Activated B cell treated with CpG ODN at 0.5 μM for 24 hours (primary cell): ENCODE measurements at regions of chrX and their contacts with region 1.

Region 1: GRCh38 chrX:86066997-86067396 is 19.6 kb upstream of the CHM start:
- DNase-seq: no peak
- ATAC-seq: no peak
- H3K4me3 Mint-ChIP-seq: no peak overlapping the region
- H3K27ac Mint-ChIP-seq: no peak overlapping the region
- H3K4me1 Mint-ChIP-seq: no peaks in the 10 kb centered on the region
- H3K27me3 Mint-ChIP-seq: no peaks in the 10 kb centered on the region
- CTCF ChIP-seq: no peak

Region 2: GRCh38 chrX:85851418-85851817 is 215.6 kb before region 1 on chrX:
- CTCF ChIA-PET with region 1: no interaction called
- POLR2A ChIA-PET with region 1: no interaction called
- intact Hi-C with region 1: loop called (anchors 5 kb)
- DNase-seq: no peak
- ATAC-seq: no peak
- H3K4me3 Mint-ChIP-seq: no peak overlapping the region
- H3K27ac Mint-ChIP-seq: no peak overlapping the region
- H3K4me1 Mint-ChIP-seq: no peaks in the 10 kb centered on the region
- H3K27me3 Mint-ChIP-seq: no peaks in the 10 kb centered on the region
- CTCF ChIP-seq: no peak

Region 3: DNA sequence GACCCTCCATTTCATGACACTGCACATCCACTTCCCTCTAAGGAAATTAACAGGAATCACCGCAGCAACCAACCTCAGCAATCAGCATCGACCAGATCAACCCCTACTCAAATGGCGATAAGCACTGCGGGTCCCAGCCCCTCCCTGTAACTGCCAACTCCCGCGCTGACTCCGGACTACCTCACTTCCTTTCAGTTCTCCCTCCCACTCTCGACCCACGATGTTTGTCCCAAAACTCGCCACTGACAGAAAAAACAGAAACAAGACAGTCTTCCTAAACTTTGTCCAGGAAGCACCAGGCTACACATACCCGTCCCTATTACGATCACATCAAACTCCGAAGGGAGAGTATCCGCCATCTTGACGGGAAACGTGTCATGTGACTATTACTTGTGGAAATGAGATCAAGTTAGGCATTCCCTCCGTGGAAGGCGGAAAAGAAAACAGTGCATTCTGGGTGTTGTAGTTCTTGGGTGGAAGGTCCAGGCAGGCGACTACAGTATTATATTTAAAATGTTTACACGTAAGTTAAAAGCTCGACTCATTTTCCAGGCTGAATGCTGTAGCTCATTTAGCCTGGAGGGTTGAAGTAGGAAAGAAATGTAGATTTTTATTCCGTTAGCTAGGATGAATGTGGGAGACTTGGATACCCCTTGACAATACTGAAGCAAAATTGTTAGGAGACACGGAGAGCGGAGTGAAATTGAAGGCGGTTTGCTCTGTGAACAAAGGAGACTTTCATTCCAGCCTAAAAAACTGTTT is 19.6 kb before region 1 on chrX and contains the start of gene CHM:
- CTCF ChIA-PET with region 1: no interaction called
- POLR2A ChIA-PET with region 1: no interaction called
- intact Hi-C with region 1: no loop called
- DNase-seq: peak; percentile 31
- ATAC-seq: peak; percentile 93
- H3K4me3 Mint-ChIP-seq: no peak within 1 kb of the TSS
- H3K27ac Mint-ChIP-seq: no peak within 1 kb of the TSS
- H3K4me1 Mint-ChIP-seq: peaks cover 4% of the 10 kb centered on the region
- H3K27me3 Mint-ChIP-seq: no peaks in the 10 kb centered on the region
- CTCF ChIP-seq: no peak
- total RNA-seq, gene CHM: 15.3 and 22.9 TPM in 2 replicates

Region 4: GRCh38 chrX:86192827-86193226 is 125.8 kb after region 1 on chrX:
- CTCF ChIA-PET with region 1: no interaction called
- POLR2A ChIA-PET with region 1: no interaction called
- intact Hi-C with region 1: no loop called
- DNase-seq: no peak
- ATAC-seq: no peak
- H3K4me3 Mint-ChIP-seq: no peak overlapping the region
- H3K27ac Mint-ChIP-seq: no peak overlapping the region
- H3K4me1 Mint-ChIP-seq: no peaks in the 10 kb centered on the region
- H3K27me3 Mint-ChIP-seq: no peaks in the 10 kb centered on the region
- CTCF ChIP-seq: no peak